Caco-2 (cell line): ENCODE measurements at regions of chr12 and their contacts with region 1.

Region 1: DNA sequence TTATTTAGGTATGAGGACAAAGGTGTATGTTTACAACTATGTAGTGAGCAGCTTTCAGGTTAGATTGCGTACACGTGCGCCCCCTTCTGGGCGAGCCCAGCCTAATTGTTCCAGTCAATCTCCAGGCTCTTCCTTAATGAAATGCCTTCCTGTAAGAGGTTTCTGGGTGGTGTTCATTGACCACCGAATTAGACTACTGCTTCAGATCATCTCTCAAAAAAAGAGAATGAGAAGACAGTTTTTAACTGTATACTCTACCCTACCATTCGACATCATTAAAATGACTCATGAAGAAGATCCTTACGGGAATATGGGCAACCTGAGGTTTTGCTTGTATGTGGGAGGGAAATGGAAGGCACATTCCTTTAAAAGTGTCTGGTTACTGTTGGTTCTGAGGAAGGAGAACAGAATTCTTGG is 2.1 kb downstream of the LUM start:
- DNase-seq: peak; percentile 47 to 74
- H3K4me3 ChIP-seq: no peak overlapping the region
- H3K4me3 Mint-ChIP-seq: no peak overlapping the region
- H3K27ac Mint-ChIP-seq: no peak overlapping the region
- H3K4me1 ChIP-seq: peaks cover 6% of the 10 kb centered on the region; the same call in 1 of the 2 replicates
- H3K4me1 Mint-ChIP-seq: peaks cover 6% of the 10 kb centered on the region
- H3K27me3 ChIP-seq: no peaks in the 10 kb centered on the region
- H3K27me3 Mint-ChIP-seq: no peaks in the 10 kb centered on the region
- CTCF ChIP-seq: peak; percentile 62 to 65

Region 2: DNA sequence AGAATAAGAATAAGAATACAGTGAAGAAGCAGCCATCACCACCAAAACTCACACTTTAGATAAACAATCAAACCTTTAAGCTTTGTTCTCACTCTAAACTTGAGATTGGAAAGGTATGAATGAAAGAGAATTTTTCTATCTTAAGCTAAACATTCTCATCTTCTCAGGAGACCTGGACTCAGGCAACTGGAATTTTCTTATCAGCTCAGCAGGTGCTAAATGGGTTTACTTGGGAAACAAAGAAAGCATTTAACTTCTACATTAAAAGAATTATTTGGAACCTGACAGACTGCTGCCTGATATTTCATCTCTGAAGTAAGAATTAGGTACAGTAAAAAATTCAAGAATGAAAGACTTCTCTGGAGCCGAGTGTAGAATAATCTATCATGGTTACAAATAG is 30.7 kb before region 1 on chr12:
- CTCF ChIA-PET with region 1: no interaction called
- POLR2A ChIA-PET with region 1: no interaction called
- intact Hi-C with region 1: loop called (anchors 1 kb)
- DNase-seq: no peak
- H3K4me3 ChIP-seq: no peak overlapping the region
- H3K4me3 Mint-ChIP-seq: peak overlapping the region; percentile 31
- H3K27ac Mint-ChIP-seq: no peak overlapping the region
- H3K4me1 ChIP-seq: peaks cover 29% of the 10 kb centered on the region
- H3K4me1 Mint-ChIP-seq: peaks cover 36% of the 10 kb centered on the region
- H3K27me3 ChIP-seq: no peaks in the 10 kb centered on the region
- H3K27me3 Mint-ChIP-seq: no peaks in the 10 kb centered on the region
- CTCF ChIP-seq: no peak

Region 3: GRCh38 chr12:91355150-91356006 is 246.2 kb after region 1 on chr12:
- CTCF ChIA-PET with region 1: interaction called, 3 read pairs
- POLR2A ChIA-PET with region 1: no interaction called
- intact Hi-C with region 1: loop called (anchors 1 kb)
- DNase-seq: peak; percentile 58 to 70
- H3K4me3 ChIP-seq: no peak overlapping the region
- H3K4me3 Mint-ChIP-seq: no peak overlapping the region
- H3K27ac Mint-ChIP-seq: no peak overlapping the region
- H3K4me1 ChIP-seq: peaks cover 16% of the 10 kb centered on the region
- H3K4me1 Mint-ChIP-seq: peaks cover 8% of the 10 kb centered on the region
- H3K27me3 ChIP-seq: no peaks in the 10 kb centered on the region
- H3K27me3 Mint-ChIP-seq: no peaks in the 10 kb centered on the region
- CTCF ChIP-seq: peak; percentile 66 to 83